Endothelial cell of umbilical vein (primary cell): ENCODE measurements at regions of chr1 and their contacts with region 1.

Region 1: GRCh38 chr1:96918406-96918805 is 196.8 kb downstream of the PTBP2 start:
- DNase-seq: no peak
- H3K4me3 ChIP-seq: no peak overlapping the region
- H3K27ac ChIP-seq: no peak overlapping the region
- H3K4me1 ChIP-seq: no peaks in the 10 kb centered on the region
- H3K27me3 ChIP-seq: peaks cover 0 to 6% of the 10 kb centered on the region in 2 experiments
- CTCF ChIP-seq: no peak
- POLR2A ChIP-seq: no peak

Region 2: GRCh38 chr1:96872757-96873156 is 45.6 kb before region 1 on chr1:
- CTCF ChIA-PET with region 1: no interaction called
- POLR2A ChIA-PET with region 1: no interaction called
- dilution Hi-C with region 1: no loop called
- intact Hi-C with region 1: loop called (anchors 1 kb)
- DNase-seq: no peak
- H3K4me3 ChIP-seq: no peak overlapping the region
- H3K27ac ChIP-seq: no peak overlapping the region
- H3K4me1 ChIP-seq: no peaks in the 10 kb centered on the region
- H3K27me3 ChIP-seq: no peaks in the 10 kb centered on the region
- CTCF ChIP-seq: no peak
- POLR2A ChIP-seq: no peak